ENCODE measurements at regions of chr4 and their contacts with region 1.

Region 1: GRCh38 chr4:70687821-70688794 is at the start of gene UTP3:
- DNase-seq: peak; percentile 92 to 95
- H3K4me3 ChIP-seq: peak within 1 kb of the TSS; percentile 98
- H3K27ac ChIP-seq: peak within 1 kb of the TSS; percentile 76
- H3K4me1 ChIP-seq: peaks cover 22% of the 10 kb centered on the region
- H3K27me3 ChIP-seq: no peaks in the 10 kb centered on the region
- CTCF ChIP-seq: peak; percentile 75
- total RNA-seq, gene UTP3: 15.1 and 16.4 TPM in 2 replicates

Region 2: DNA sequence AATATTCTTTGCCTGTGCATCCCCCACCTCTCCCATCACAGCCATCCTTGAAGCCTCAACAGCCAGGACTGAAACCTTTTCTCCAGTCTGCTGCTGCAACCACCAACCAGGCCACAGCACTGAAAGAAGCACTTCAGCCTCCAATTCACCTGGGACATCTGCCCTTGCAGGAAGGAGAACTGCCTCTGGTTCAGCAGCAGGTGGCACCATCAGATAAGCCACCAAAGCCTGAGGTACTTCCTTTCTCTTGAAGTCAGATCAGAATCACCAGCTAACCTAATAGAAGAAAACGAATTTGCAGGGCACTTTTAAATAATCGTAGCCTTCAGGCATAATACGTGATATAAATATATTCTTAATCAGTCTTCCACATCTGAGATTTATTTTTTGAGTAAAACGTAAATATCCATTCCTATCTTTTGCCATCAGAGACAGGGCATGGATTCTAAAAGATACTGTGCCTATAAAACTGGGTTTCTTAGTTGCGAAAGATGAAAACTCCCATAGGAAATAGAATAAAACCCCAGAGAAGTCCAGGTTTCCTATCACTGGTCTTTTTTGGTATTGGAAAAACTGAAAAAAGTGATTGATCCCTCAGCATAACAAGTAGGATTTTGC is 86.6 kb before region 1 on chr4:
- CTCF ChIA-PET with region 1: no interaction called
- POLR2A ChIA-PET with region 1: no interaction called
- intact Hi-C with region 1: loop called (anchors 10 kb)
- DNase-seq: peak; percentile 45 to 46
- H3K4me3 ChIP-seq: no peak overlapping the region
- H3K27ac ChIP-seq: no peak overlapping the region
- H3K4me1 ChIP-seq: no peaks in the 10 kb centered on the region
- H3K27me3 ChIP-seq: no peaks in the 10 kb centered on the region
- CTCF ChIP-seq: peak; percentile 72

Region 3: GRCh38 chr4:70704331-70705145 is 16.4 kb after region 1 on chr4:
- CTCF ChIA-PET with region 1: no interaction called
- POLR2A ChIA-PET with region 1: no interaction called
- intact Hi-C with region 1: loop called (anchors 1 kb)
- DNase-seq: peak; percentile 42 to 73
- H3K4me3 ChIP-seq: peak overlapping the region; percentile 87
- H3K27ac ChIP-seq: peak overlapping the region; percentile 72
- H3K4me1 ChIP-seq: peaks cover 24% of the 10 kb centered on the region
- H3K27me3 ChIP-seq: no peaks in the 10 kb centered on the region
- CTCF ChIP-seq: peak; percentile 44; the same call in 1 of the 2 replicates

Region 4: GRCh38 chr4:70839589-70840093 is 151.5 kb after region 1 on chr4 and contains the start of gene GRSF1:
- CTCF ChIA-PET with region 1: no interaction called
- POLR2A ChIA-PET with region 1: no interaction called
- intact Hi-C with region 1: loop called (anchors 1 kb)
- DNase-seq: peak; percentile 58 to 86
- H3K4me3 ChIP-seq: peak within 1 kb of the TSS; percentile 80
- H3K27ac ChIP-seq: peak within 1 kb of the TSS; percentile 54
- H3K4me1 ChIP-seq: peaks cover 6% of the 10 kb centered on the region
- H3K27me3 ChIP-seq: no peaks in the 10 kb centered on the region
- CTCF ChIP-seq: no peak
- total RNA-seq, gene GRSF1: 52.4 and 70.0 TPM in 2 replicates

Region 5: GRCh38 chr4:70874268-70875156 is 186.4 kb after region 1 on chr4:
- CTCF ChIA-PET with region 1: interaction called, 13 read pairs
- POLR2A ChIA-PET with region 1: no interaction called
- intact Hi-C with region 1: no loop called
- DNase-seq: no peak
- H3K4me3 ChIP-seq: no peak overlapping the region
- H3K27ac ChIP-seq: no peak overlapping the region
- H3K4me1 ChIP-seq: no peaks in the 10 kb centered on the region
- H3K27me3 ChIP-seq: no peaks in the 10 kb centered on the region
- CTCF ChIP-seq: no peak

Region 6: DNA sequence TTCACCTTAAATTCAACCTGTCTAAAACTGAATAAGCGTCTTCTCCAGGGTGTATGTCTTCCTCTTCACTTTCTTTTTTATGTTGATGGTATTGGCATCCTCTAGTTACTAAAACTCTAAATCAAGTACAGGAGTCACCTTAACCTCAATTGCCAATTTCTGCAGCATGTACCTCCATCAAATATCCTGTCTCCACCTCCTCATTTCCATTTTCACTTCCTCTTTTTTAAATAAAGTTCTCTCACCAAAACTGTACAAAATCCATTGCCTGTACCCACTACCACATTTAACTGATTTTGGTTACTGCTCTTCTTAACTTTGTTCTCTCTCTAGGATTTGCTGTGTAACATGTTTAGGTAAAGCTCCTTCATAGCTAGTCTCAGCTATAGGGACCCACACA is 1334.4 kb after region 1 on chr4:
- CTCF ChIA-PET with region 1: no interaction called
- POLR2A ChIA-PET with region 1: no interaction called
- intact Hi-C with region 1: no loop called
- DNase-seq: no peak
- H3K4me3 ChIP-seq: no peak overlapping the region
- H3K27ac ChIP-seq: no peak overlapping the region
- H3K4me1 ChIP-seq: no peaks in the 10 kb centered on the region
- H3K27me3 ChIP-seq: no peaks in the 10 kb centered on the region
- CTCF ChIP-seq: no peak